ENCODE measurements at regions of chr17 and their contacts with region 1.

Region 1: DNA sequence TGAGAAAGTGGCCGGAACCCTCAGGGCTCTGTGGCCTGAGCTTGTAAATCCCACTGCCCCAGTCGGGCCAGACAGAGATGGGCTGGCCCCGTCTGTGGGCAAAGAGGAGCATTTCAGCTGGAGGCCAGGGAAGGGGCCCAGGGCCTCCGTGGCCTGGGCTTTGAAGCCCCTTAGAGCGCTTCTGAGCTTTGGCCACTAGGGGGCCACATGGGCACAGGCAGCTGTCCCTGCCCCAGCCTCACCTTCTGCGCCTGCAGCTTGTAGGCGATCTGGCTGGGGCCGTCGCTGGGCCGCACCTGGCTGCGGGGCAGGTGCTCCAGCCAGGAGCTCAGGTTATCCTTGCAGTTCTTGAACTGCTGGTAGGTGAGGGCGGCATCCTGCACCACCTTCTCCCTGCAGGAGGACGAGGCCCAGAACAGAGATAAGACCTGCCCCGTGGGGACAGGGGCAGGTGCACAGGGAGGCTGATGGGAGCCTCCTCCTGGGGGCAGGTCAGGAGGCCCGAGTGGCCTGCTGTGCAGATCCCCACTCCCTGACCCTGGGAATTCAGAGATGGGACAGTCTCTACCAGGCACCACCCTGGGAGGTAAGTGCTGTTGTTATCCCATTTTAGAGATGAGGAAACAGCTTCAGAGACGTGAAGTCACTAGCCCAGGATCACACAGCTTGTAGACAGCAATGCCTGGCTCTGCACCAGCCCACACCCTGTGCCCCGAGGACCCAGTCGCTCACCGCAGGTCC is 12.8 kb downstream of the EVPL start:
- DNase-seq: peak; percentile 61
- H3K4me3 ChIP-seq: no peak overlapping the region
- H3K27ac ChIP-seq: no peak overlapping the region
- H3K4me1 ChIP-seq: peaks cover 9% of the 10 kb centered on the region
- H3K27me3 ChIP-seq: no peaks in the 10 kb centered on the region
- CTCF ChIP-seq: peak; percentile 95 to 99

Region 2: GRCh38 chr17:75806886-75807500 is 207.4 kb before region 1 on chr17:
- CTCF ChIA-PET with region 1: no interaction called
- dilution Hi-C with region 1: no loop called
- in situ Hi-C with region 1: no loop called
- intact Hi-C with region 1: no loop called
- DNase-seq: no peak
- H3K4me3 ChIP-seq: no peak overlapping the region
- H3K27ac ChIP-seq: no peak overlapping the region
- H3K4me1 ChIP-seq: peaks cover 18% of the 10 kb centered on the region
- H3K27me3 ChIP-seq: no peaks in the 10 kb centered on the region
- CTCF ChIP-seq: no peak

Region 3: GRCh38 chr17:76072148-76072858 is 57.9 kb after region 1 on chr17 and contains the start of gene SRP68:
- CTCF ChIA-PET with region 1: no interaction called
- dilution Hi-C with region 1: no loop called
- in situ Hi-C with region 1: no loop called
- intact Hi-C with region 1: loop called (anchors 1 kb)
- DNase-seq: peak; percentile 93
- H3K4me3 ChIP-seq: peak within 1 kb of the TSS; percentile 62 to 97 (median 86)
- H3K27ac ChIP-seq: peak within 1 kb of the TSS; percentile 87
- H3K4me1 ChIP-seq: peaks cover 37% of the 10 kb centered on the region
- H3K27me3 ChIP-seq: peaks cover 36% of the 10 kb centered on the region
- CTCF ChIP-seq: no peak
- total RNA-seq, gene SRP68: 24.5 to 102 TPM

Region 4: GRCh38 chr17:76147211-76148014 is 133.1 kb after region 1 on chr17:
- CTCF ChIA-PET with region 1: no interaction called
- dilution Hi-C with region 1: no loop called
- in situ Hi-C with region 1: no loop called
- intact Hi-C with region 1: loop called (anchors 1 kb)
- DNase-seq: peak; percentile 11
- H3K4me3 ChIP-seq: no peak overlapping the region
- H3K27ac ChIP-seq: no peak overlapping the region
- H3K4me1 ChIP-seq: no peaks in the 10 kb centered on the region
- H3K27me3 ChIP-seq: no peaks in the 10 kb centered on the region
- CTCF ChIP-seq: peak; percentile 62 to 70

Region 5: DNA sequence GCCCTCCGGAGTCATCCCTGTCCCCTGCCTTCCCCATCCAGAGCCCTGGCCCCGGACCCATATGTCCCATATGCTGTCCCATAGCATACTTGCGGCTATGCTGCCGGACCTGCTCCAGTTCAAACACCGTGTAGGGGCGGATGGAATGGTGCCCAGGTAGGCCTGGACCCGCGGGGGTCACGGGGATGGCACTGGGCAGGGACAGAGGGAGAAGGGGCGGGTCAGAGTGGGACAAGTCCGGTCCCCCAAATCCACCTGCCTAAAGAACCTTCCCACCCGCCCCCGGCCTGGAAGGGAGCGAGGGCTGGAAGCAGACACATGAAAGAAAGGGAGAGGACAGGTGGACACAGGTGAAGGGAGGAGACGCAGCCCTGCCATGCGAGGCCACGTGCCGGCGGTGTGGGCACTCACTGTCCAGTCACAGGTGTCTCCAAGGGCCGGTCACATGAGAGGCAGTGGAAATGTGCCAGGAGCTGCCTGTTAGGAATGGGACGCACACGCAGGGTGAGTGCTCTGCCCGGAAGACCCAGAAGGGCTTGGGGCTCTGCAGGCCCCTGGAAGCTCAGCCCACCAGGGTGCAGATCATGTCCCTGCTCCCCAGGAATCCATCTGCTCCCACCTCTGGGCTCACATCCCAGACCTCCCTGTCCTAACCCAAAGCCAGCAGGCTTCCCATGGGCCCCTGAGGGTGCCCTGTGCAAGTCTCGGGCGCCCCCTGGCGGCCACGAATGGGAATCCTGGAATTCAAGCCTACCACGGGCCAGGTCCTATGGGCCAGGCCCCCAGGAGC is 264.8 kb after region 1 on chr17:
- CTCF ChIA-PET with region 1: interaction called, 3 read pairs
- dilution Hi-C with region 1: no loop called
- in situ Hi-C with region 1: no loop called
- intact Hi-C with region 1: loop called (anchors 5 kb)
- DNase-seq: peak; percentile 51
- H3K4me3 ChIP-seq: no peak overlapping the region
- H3K27ac ChIP-seq: no peak overlapping the region
- H3K4me1 ChIP-seq: peaks cover 4% of the 10 kb centered on the region
- H3K27me3 ChIP-seq: no peaks in the 10 kb centered on the region
- CTCF ChIP-seq: peak; percentile 72 to 99